Ascending aorta (tissue), 2 donors: ENCODE measurements at regions of chr9 and their contacts with region 1.

Region 1: GRCh38 chr9:131739980-131740648 is at the start of gene RAPGEF1:
- DNase-seq: peak in 1 of 2 donors; percentile 83
- H3K4me3 ChIP-seq: peak within 1 kb of the TSS; percentile 64 to 86
- H3K27ac ChIP-seq: peak within 1 kb of the TSS; percentile 53 to 89
- H3K4me1 ChIP-seq: peaks cover 0 to 29% of the 10 kb centered on the region in 2 donors
- H3K27me3 ChIP-seq: no peaks in the 10 kb centered on the region
- CTCF ChIP-seq: peak; percentile 69 to 99 (median 81)
- total RNA-seq, gene RAPGEF1: 95.5 TPM

Region 2: DNA sequence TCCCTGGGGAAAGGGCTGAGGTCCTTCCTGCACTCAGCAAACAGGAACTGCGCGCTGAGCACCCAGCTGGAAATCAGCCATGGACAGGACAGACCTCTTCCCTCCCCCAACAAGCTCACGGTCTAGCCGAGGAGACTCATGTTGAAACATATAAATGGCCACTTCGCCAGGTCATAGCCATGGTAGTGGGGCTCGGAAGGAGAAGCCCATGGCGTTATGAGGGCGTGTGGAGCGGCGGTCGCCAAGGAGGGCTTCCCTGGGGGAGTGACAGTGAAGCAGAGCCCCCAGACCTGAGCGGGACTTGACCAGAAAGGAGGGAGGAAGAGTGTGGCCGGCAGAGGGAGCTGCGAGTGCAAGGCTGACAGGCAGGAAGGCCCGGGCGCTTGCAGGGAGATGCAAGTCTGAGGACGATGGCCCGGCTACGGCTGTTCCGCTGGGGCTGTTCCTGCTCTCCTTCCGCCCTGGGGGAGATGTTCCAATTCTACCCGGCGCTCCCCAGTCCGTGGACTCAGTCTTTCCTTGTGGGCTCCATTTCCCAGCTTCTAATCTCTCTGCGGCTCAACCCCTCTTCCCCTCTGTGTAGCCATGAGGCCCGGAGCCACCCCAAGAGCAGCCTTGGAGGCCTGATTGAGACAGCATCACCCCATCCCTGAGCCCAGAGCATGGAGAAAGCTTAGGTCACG is 390.1 kb before region 1 on chr9:
- intact Hi-C with region 1: loop called (anchors 5 kb)
- DNase-seq: peak; percentile 32 to 92
- H3K4me3 ChIP-seq: peak overlapping the region in 1 of 2 donors; percentile 45
- H3K27ac ChIP-seq: no peak overlapping the region
- H3K4me1 ChIP-seq: no peaks in the 10 kb centered on the region
- H3K27me3 ChIP-seq: no peaks in the 10 kb centered on the region
- CTCF ChIP-seq: peak; percentile 82 to 89 (median 87)

Region 3: GRCh38 chr9:131530920-131531832 is 208.9 kb before region 1 on chr9 and contains the start of gene UCK1:
- intact Hi-C with region 1: loop called (anchors 5 kb)
- DNase-seq: peak in 1 of 2 donors; percentile 80
- H3K4me3 ChIP-seq: peak within 1 kb of the TSS; percentile 93 to 99
- H3K27ac ChIP-seq: peak within 1 kb of the TSS; percentile 79 to 81
- H3K4me1 ChIP-seq: peaks cover 11 to 14% of the 10 kb centered on the region in 2 donors
- H3K27me3 ChIP-seq: no peaks in the 10 kb centered on the region
- CTCF ChIP-seq: no peak
- total RNA-seq, gene UCK1: 39.8 TPM

Region 4: GRCh38 chr9:131590908-131591844 is 148.9 kb before region 1 on chr9:
- intact Hi-C with region 1: loop called (anchors 1 kb)
- DNase-seq: peak; percentile 37 to 88
- H3K4me3 ChIP-seq: no peak overlapping the region
- H3K27ac ChIP-seq: no peak overlapping the region
- H3K4me1 ChIP-seq: no peaks in the 10 kb centered on the region
- H3K27me3 ChIP-seq: no peaks in the 10 kb centered on the region
- CTCF ChIP-seq: peak; percentile 70 to 91 (median 82)

Region 5: DNA sequence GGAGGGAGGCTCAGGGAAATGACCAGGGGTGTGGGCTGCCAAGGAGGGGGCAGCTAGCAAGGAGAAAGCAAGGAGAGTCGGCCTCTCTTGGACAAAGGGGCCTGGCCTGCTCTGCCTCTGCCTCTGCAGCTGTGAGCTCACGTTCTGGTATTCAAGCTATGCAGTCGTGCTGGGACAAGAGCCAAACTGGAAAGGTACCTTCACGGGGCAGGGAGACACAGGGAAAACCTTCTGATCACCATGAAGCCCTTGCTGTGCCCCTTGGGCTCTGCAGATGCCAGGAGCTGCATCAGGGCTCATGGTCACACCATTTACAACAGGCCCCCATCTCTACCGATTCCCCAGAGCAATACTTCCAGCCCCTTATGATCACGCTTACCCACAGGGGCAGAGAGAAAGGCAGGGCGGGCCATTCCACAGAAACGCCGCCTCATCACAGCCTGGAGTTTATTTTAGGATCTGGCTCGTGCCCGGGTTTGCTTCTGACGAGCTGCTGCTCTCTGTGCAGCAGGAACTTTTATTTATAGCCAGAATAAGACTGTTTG is 131.5 kb before region 1 on chr9:
- intact Hi-C with region 1: loop called (anchors 1 kb)
- DNase-seq: peak; percentile 36 to 92
- H3K4me3 ChIP-seq: peak overlapping the region in 1 of 2 donors; percentile 49
- H3K27ac ChIP-seq: peak overlapping the region; percentile 76 to 91
- H3K4me1 ChIP-seq: peaks cover 12 to 43% of the 10 kb centered on the region in 2 donors
- H3K27me3 ChIP-seq: no peaks in the 10 kb centered on the region
- CTCF ChIP-seq: no peak

Region 6: GRCh38 chr9:131678499-131679111 is 61.5 kb before region 1 on chr9:
- intact Hi-C with region 1: loop called (anchors 2 kb)
- DNase-seq: peak; percentile 85 to 93
- H3K4me3 ChIP-seq: no peak overlapping the region
- H3K27ac ChIP-seq: peak overlapping the region; percentile 93 to 96
- H3K4me1 ChIP-seq: peaks cover 34 to 80% of the 10 kb centered on the region in 2 donors
- H3K27me3 ChIP-seq: no peaks in the 10 kb centered on the region
- CTCF ChIP-seq: no peak